ENCODE measurements at regions of chr10 and their contacts with region 1.

Region 1: GRCh38 chr10:101818119-101818871 is at the start of gene OGA:
- DNase-seq: peak; percentile 96

Region 2: DNA sequence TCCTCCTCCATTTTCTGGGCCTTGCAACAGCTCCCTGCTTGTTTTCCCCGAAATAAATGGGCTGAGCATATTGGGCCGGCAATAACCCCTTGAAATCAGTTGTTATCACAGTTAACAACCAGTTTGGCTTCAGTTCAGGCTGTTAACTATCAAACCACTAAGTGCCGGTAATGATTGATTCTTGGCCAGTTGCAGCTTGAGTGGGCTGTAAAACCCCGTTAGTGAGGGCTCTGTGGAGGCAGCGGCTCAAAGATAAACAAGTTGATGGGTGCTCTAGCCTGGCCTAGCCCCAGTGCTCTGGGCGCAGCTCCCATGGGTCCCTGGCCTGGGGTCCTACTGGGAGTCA is 50.7 kb before region 1 on chr10:
- CTCF ChIA-PET with region 1: interaction called, 10 read pairs
- POLR2A ChIA-PET with region 1: no interaction called
- DNase-seq: no peak

Region 3: GRCh38 chr10:101782811-101783735 is 35.2 kb before region 1 on chr10 and contains the start of gene NPM3:
- CTCF ChIA-PET with region 1: interaction called, 12 read pairs
- POLR2A ChIA-PET with region 1: interaction called, 24 read pairs
- DNase-seq: peak; percentile 92

Region 4: DNA sequence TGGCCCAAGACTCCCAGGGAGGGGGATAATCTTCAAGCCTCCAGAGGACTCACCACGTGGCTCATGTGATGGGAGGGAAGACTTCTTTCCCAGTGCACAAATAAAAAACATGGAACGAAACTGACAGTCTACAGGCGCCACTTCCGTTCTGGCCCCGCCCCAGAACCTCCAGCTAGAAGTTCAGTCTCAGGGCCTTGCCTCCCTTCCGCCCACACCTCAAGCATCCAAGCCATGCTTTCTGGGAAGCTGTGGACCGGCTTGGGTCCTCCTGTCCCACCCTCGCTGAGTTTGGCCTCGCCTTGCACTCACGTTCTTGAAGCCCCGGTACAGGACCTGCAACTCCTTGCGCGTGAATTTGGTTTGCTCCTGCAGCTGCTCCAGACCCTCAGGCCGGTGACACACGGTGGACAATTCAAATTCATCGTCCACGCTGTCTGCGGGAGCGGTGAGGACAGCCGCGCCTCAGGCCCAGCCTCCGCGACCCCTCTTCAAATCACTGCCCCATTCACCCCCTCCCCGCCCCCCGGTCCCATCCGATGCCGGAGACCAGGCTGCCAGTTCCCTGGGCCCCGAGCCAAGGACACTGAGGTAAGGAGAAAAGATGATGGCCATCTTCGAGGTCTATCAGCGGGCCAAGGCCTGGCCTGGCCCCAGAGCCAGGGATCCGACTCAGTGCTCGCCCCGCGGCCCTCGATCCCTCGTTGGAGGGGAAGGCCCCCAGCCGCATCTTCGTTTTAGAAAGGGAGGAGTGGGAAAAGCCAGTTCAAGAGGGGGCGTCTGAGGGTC is 10.7 kb after region 1 on chr10:
- CTCF ChIA-PET with region 1: no interaction called
- POLR2A ChIA-PET with region 1: interaction called, 16 read pairs
- DNase-seq: no peak

Region 5: DNA sequence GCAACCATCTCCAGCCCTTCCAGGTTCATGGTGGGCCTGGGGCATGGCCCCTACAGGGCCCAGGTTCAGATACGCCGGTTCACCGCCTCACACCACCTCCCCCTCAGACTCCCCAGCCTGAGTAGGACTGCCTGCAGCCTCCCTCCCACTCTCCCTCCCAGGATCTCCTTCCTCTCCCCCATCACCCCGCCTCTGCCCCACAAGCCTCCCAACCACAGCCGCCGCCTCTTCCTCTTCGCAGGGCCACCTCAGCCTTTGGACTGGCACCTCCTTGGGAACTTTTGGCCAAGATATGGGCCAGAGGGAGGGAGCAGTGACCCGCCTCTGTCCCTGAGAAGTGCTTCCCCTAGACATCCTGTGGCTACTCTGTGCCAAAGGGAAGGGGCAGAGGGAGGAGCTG is 16.0 kb after region 1 on chr10:
- CTCF ChIA-PET with region 1: interaction called, 9 read pairs
- POLR2A ChIA-PET with region 1: interaction called, 17 read pairs
- DNase-seq: no peak

Region 6: DNA sequence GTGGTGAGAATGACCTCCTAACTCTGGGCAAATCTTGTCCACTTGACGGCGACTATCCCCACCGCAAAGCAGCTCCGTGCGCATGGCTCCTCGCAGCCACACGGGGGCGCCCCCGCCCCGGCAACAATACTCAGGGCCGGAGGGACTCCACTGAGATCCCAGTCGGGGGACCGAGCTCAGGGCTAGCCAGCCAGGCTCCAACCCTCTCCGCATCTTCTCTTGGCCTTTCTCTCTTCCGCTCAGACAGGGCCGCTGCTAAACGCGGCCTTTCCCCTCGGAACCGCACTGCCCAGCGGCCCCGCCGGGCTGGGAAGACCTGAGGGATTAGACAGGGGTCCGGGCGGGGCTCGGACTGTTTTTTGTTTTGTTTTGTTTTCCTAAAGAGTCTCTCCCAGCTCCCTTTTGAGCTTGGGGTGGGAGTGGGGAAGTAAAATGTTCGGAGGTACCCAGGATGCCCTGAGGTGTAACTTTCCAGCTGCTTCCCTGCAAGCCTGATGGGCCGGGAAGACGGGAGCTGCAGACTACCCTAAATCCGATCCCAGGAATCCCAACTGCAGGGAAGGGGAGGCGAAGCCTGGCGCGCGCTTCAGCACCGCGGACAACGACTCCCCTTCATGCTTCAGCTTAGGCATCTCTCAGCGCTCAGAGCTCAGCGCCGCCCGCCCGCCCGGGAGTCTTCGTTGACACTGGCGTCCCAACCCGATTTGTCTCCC is 22.6 kb after region 1 on chr10:
- CTCF ChIA-PET with region 1: interaction called, 9 read pairs
- POLR2A ChIA-PET with region 1: interaction called, 17 read pairs
- DNase-seq: peak; percentile 95